Transverse colon (tissue), 4 donors: ENCODE measurements at regions of chr1 and their contacts with region 1.

Region 1: DNA sequence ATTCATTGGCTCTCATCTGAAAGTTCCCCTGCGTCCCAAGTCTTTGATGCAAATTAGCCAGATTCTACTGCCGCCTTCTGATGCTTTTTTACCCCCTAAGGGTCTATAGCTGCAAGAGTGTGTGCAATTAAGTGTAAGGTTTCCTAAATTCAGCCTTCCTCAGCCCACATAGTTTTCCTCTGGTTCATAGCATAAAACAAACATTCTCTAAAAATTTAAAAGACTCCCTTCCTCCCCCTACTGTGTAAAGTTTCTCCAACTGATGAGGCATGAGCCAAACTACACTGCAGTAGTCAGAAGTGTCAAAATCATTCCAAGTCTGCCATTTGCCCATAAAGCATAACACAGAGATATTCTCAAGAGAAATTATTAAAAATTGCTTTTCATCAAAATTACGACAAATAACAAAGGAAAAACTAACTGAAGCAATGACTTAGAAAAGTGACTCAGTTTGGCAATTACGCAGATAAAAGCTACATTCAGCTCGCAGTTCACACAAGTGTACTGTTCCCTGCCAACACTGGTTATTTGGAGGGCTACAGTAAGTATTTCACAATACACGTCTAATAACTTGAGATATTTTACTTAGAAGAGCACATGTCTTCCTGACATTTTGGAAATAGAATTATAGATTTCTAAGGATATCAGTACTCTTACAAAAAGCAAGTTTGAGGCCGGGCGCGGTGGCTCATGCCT is 15.4 kb downstream of the KCNH1 start:
- DNase-seq: no peak
- H3K4me3 ChIP-seq: no peak overlapping the region
- H3K27ac ChIP-seq: no peak overlapping the region
- H3K4me1 ChIP-seq: no peaks in the 10 kb centered on the region
- H3K27me3 ChIP-seq: no peaks in the 10 kb centered on the region
- CTCF ChIP-seq: no peak
- EP300 ChIP-seq: no peak
- POLR2A ChIP-seq: no peak

Region 2: GRCh38 chr1:210600421-210601159 is 518.0 kb before region 1 on chr1:
- in situ Hi-C with region 1: loop called in 1 of 4 experiments (anchors 10 kb)
- intact Hi-C with region 1: no loop called
- DNase-seq: no peak
- H3K4me3 ChIP-seq: no peak overlapping the region
- H3K27ac ChIP-seq: no peak overlapping the region
- H3K4me1 ChIP-seq: peaks cover 0 to 3% (median 0%) of the 10 kb centered on the region in 4 donors
- H3K27me3 ChIP-seq: no peaks in the 10 kb centered on the region
- CTCF ChIP-seq: no peak
- EP300 ChIP-seq: no peak
- POLR2A ChIP-seq: no peak

Region 3: GRCh38 chr1:210922666-210923065 is 195.9 kb before region 1 on chr1:
- in situ Hi-C with region 1: no loop called
- intact Hi-C with region 1: no loop called
- DNase-seq: no peak
- H3K4me3 ChIP-seq: no peak overlapping the region
- H3K27ac ChIP-seq: no peak overlapping the region
- H3K4me1 ChIP-seq: no peaks in the 10 kb centered on the region
- H3K27me3 ChIP-seq: no peaks in the 10 kb centered on the region
- CTCF ChIP-seq: no peak
- EP300 ChIP-seq: no peak
- POLR2A ChIP-seq: no peak